ENCODE measurements at regions of chr1 and their contacts with region 1.

Region 1: GRCh38 chr1:66446261-66447001 is 87.5 kb upstream of the SGIP1 start:
- DNase-seq: no peak
- H3K4me3 ChIP-seq: peak overlapping the region in 1 of 4 experiments; percentile 9; a peak in 1 of 8 replicates
- H3K27ac ChIP-seq: no peak overlapping the region
- H3K4me1 ChIP-seq: peaks cover 0 to 6% (median 0%) of the 10 kb centered on the region in 4 experiments; a peak in 3 of 7 replicates
- H3K27me3 ChIP-seq: no peaks in the 10 kb centered on the region
- CTCF ChIP-seq: peak in 2 of 3 experiments; percentile 71 to 74; a peak in 3 of 4 replicates
- EP300 ChIP-seq: no peak
- POLR2A ChIP-seq: no peak
- RAD21 ChIP-seq: peak; percentile 93 to 95

Region 2: DNA sequence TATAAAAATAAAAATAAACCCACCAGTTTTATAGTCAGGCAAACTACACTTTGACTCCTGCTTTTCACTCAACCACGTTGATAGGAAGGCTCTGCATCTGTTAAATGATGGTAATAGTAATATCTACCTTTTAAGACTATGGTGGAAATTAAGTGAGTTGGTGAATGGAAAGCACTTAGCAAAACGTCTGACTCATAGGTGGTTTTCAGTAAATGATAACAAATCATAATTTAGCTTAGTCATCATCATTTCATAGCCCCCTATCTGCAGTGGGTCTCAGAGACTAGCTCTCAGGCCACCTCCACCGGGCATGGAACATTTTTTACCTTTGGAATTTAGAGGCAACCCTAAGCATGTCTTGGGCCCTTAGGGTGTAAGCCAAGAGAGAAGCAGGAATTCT is 493.7 kb before region 1 on chr1:
- CTCF ChIA-PET with region 1: interaction called, 10 read pairs
- POLR2A ChIA-PET with region 1: no interaction called
- DNase-seq: no peak
- H3K4me3 ChIP-seq: no peak overlapping the region
- H3K27ac ChIP-seq: no peak overlapping the region
- H3K4me1 ChIP-seq: no peaks in the 10 kb centered on the region
- H3K27me3 ChIP-seq: no peaks in the 10 kb centered on the region
- CTCF ChIP-seq: no peak
- EP300 ChIP-seq: no peak
- POLR2A ChIP-seq: no peak
- RAD21 ChIP-seq: no peak

Region 3: DNA sequence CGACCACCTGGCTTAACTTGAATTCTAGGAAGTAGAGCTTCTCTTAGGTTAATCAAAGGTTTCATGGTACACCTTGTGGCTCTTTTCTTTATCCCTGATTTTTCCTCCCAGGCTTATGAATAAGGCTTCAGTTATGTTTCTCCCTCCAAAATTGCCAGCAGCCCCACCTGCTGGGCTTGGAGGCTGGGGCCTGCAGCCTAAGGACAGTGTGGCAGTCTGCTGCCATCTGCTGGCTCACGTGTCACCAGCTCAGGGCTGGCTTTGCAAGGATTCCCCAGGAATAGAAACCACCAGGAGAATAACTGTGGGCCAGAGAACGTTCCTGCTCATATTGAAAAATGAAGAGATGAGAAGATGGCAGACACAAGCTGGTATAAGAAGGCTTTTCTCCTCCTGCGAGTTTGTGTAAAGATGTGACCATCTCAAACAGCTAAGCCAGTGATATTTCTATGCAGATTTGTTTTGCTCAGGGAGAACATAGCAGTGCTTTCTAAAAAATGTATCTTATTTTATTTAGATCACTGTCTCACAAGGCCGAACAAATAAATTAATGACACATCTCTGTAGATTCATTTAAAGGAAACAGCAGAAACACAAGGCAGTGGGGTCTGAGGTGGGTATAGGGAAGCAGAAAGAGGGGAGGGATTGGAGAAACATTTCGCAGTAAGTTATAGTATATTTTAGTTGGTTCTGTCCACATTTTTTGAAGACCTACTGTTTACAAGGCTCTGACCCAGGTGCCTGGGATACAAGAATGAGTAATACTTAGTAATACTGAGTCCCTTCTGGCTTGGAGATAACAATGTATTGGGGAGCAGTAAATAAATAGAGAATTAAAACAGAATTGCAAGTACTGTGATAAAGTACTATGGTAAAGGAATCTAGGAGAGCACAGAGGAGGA is 203.5 kb before region 1 on chr1:
- CTCF ChIA-PET with region 1: interaction called, 273 read pairs
- POLR2A ChIA-PET with region 1: no interaction called
- DNase-seq: peak; percentile 60 to 80
- H3K4me3 ChIP-seq: no peak overlapping the region
- H3K27ac ChIP-seq: no peak overlapping the region
- H3K4me1 ChIP-seq: no peaks in the 10 kb centered on the region
- H3K27me3 ChIP-seq: no peaks in the 10 kb centered on the region
- CTCF ChIP-seq: peak; percentile 97 to 99 (median 98)
- EP300 ChIP-seq: no peak
- POLR2A ChIP-seq: no peak
- RAD21 ChIP-seq: peak; percentile 98 to 100

Region 4: DNA sequence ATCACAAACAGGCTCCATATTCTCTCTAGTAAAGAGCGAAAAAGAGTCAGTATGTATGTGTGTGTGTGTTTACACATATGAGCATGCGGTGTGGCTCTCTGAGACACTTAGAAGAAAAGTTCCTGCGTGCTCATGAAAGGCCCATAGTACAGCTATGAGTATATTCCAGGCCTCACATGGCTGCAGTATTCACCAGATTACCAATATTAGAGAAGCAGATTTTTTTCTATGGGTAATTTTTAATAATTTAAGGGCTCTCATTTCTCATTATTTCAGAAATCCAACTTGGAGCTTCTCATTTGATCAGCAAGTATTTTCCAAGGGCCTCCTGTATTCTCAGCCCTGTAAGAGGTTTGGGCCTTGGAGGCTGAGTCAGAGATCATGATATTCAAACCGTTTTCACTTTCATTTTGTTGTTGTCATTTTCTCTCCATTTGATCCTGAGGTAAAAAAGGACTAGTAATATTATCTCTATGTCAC is 145.4 kb before region 1 on chr1:
- CTCF ChIA-PET with region 1: interaction called, 14 read pairs
- POLR2A ChIA-PET with region 1: interaction called, 3 read pairs
- DNase-seq: no peak
- H3K4me3 ChIP-seq: no peak overlapping the region
- H3K27ac ChIP-seq: no peak overlapping the region
- H3K4me1 ChIP-seq: no peaks in the 10 kb centered on the region
- H3K27me3 ChIP-seq: peaks cover 0 to 2% (median 0%) of the 10 kb centered on the region in 4 experiments; a peak in 1 of 7 replicates
- CTCF ChIP-seq: no peak
- EP300 ChIP-seq: no peak
- POLR2A ChIP-seq: no peak
- RAD21 ChIP-seq: no peak

Region 5: GRCh38 chr1:66360285-66360724 is 86.1 kb before region 1 on chr1:
- CTCF ChIA-PET with region 1: interaction called, 29 read pairs
- POLR2A ChIA-PET with region 1: no interaction called
- DNase-seq: no peak
- H3K4me3 ChIP-seq: no peak overlapping the region
- H3K27ac ChIP-seq: no peak overlapping the region
- H3K4me1 ChIP-seq: peaks cover 0 to 7% (median 4%) of the 10 kb centered on the region in 4 experiments; a peak in 3 of 7 replicates
- H3K27me3 ChIP-seq: no peaks in the 10 kb centered on the region
- CTCF ChIP-seq: peak in 1 of 3 experiments; percentile 25; a peak in 2 of 4 replicates
- EP300 ChIP-seq: no peak
- POLR2A ChIP-seq: no peak
- RAD21 ChIP-seq: peak in 1 of 2 experiments; percentile 13; a peak in 1 of 4 replicates

Region 6: GRCh38 chr1:66503841-66504470 is 57.5 kb after region 1 on chr1:
- CTCF ChIA-PET with region 1: interaction called, 53 read pairs
- POLR2A ChIA-PET with region 1: no interaction called
- DNase-seq: peak; percentile 7 to 68
- H3K4me3 ChIP-seq: no peak overlapping the region
- H3K27ac ChIP-seq: no peak overlapping the region
- H3K4me1 ChIP-seq: no peaks in the 10 kb centered on the region
- H3K27me3 ChIP-seq: no peaks in the 10 kb centered on the region
- CTCF ChIP-seq: peak; percentile 50 to 86 (median 71)
- EP300 ChIP-seq: no peak
- POLR2A ChIP-seq: no peak
- RAD21 ChIP-seq: peak; percentile 81 to 90

Measured in H1 (cell line).